ENCODE measurements at regions of chrX and their contacts with region 1.

Region 1: DNA sequence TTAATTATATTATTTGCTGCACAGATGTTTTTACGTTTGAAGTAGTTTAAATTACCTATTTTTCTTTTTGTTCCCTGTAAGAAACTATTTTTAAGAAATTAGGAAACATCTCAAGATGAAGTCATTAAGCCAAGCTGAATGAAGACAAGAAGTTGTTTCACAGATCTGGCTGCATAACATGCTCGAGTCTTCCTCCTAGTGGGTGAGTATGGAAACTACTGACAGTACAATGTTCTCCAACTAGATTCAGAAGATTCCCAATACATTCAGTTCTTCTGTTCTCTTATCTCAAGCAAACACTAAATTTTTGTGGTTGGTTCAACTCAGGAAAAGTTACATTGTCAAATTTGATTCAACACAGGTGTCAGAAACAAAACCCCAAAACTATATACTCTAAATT is 256.8 kb upstream of the VCX start:
- DNase-seq: peak; percentile 35
- ATAC-seq: peak; percentile 75
- H3K4me3 ChIP-seq: no peak overlapping the region
- H3K27ac ChIP-seq: no peak overlapping the region
- H3K4me1 ChIP-seq: no peaks in the 10 kb centered on the region
- H3K27me3 ChIP-seq: no peaks in the 10 kb centered on the region
- CTCF ChIP-seq: peak; percentile 53
- POLR2A ChIP-seq: no peak
- RAD21 ChIP-seq: peak; percentile 56

Region 2: GRCh38 chrX:7233580-7234406 is 352.3 kb before region 1 on chrX:
- CTCF ChIA-PET with region 1: no interaction called
- POLR2A ChIA-PET with region 1: no interaction called
- dilution Hi-C with region 1: no loop called
- in situ Hi-C with region 1: no loop called
- intact Hi-C with region 1: loop called (anchors 10 kb)
- DNase-seq: no peak
- ATAC-seq: peak; percentile 29
- H3K4me3 ChIP-seq: no peak overlapping the region
- H3K27ac ChIP-seq: no peak overlapping the region
- H3K4me1 ChIP-seq: no peaks in the 10 kb centered on the region
- H3K27me3 ChIP-seq: no peaks in the 10 kb centered on the region
- CTCF ChIP-seq: peak; percentile 24; the same call in 1 of the 2 replicates
- POLR2A ChIP-seq: no peak
- RAD21 ChIP-seq: peak; percentile 24

Measured in IMR-90 (cell line).